ENCODE measurements at regions of chr2 and their contacts with region 1.

Region 1: GRCh38 chr2:85813982-85814801 is 60.4 kb downstream of the ATOH8 start:
- DNase-seq: peak; percentile 70
- H3K4me3 ChIP-seq: no peak overlapping the region
- H3K27ac ChIP-seq: no peak overlapping the region
- H3K27me3 ChIP-seq: no peaks in the 10 kb centered on the region
- CTCF ChIP-seq: peak; percentile 99

Region 2: GRCh38 chr2:85635636-85636035 is 178.6 kb before region 1 on chr2:
- CTCF ChIA-PET with region 1: interaction called, 30 read pairs
- POLR2A ChIA-PET with region 1: no interaction called
- DNase-seq: no peak
- H3K4me3 ChIP-seq: no peak overlapping the region
- H3K27ac ChIP-seq: peak overlapping the region; percentile 21
- H3K27me3 ChIP-seq: no peaks in the 10 kb centered on the region
- CTCF ChIP-seq: no peak

Region 3: DNA sequence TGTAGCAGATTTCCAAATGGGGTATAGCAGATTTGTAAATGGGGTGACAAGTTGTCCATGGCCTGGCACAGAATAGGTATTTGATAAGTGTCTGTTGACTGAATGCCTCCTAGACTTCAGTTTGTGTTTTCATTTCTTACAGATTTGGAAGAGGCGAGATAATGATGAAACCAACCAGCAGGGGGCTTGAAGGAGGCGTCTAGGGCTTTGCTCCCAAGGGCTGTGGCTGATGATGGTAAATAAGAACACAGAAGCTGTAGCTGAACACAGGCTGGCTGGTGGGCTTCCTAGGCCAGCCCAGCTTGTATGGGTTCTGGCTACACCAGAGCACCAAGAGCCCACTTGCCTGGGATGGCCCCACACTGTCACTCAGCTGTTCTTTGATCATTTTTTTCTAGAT is 165.6 kb before region 1 on chr2:
- CTCF ChIA-PET with region 1: interaction called, 27 read pairs
- POLR2A ChIA-PET with region 1: no interaction called
- DNase-seq: peak; percentile 39
- H3K4me3 ChIP-seq: no peak overlapping the region
- H3K27ac ChIP-seq: peak overlapping the region; percentile 98
- H3K27me3 ChIP-seq: no peaks in the 10 kb centered on the region
- CTCF ChIP-seq: peak; percentile 71

Region 4: DNA sequence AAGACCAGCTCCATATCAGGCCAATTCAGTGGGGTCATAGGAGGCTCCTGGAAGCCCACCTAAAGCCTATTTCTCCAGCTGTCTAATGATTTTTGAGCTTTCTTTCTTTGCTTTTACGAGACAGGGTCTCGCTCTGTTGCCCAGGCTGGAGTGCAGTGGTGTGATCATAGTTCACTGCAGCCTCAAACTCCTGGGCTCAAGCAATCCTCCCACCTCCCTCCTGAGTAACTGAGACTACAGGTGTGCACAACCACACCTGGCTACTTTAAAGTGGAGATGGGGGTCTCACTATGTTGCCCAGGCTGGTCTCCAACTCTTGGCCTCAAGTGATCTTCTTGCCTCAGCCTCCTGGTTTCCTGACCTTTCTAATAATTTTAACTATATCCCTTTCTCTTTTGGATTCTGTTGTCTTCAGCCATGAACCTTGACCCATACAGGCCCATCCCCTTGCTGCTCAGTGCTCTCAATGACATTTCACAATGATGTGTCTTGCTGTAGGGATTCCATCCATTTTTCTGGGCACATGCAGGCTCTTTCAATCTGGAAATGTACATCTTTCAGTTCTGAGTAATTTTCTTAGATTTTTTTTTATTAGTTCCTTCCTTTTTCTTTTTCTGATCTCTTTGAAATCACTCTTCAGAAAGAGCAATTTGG is 90.4 kb before region 1 on chr2:
- CTCF ChIA-PET with region 1: interaction called, 203 read pairs
- POLR2A ChIA-PET with region 1: interaction called, 8 read pairs
- DNase-seq: no peak
- H3K4me3 ChIP-seq: no peak overlapping the region
- H3K27ac ChIP-seq: no peak overlapping the region
- H3K27me3 ChIP-seq: peaks cover 21% of the 10 kb centered on the region
- CTCF ChIP-seq: no peak

Region 5: DNA sequence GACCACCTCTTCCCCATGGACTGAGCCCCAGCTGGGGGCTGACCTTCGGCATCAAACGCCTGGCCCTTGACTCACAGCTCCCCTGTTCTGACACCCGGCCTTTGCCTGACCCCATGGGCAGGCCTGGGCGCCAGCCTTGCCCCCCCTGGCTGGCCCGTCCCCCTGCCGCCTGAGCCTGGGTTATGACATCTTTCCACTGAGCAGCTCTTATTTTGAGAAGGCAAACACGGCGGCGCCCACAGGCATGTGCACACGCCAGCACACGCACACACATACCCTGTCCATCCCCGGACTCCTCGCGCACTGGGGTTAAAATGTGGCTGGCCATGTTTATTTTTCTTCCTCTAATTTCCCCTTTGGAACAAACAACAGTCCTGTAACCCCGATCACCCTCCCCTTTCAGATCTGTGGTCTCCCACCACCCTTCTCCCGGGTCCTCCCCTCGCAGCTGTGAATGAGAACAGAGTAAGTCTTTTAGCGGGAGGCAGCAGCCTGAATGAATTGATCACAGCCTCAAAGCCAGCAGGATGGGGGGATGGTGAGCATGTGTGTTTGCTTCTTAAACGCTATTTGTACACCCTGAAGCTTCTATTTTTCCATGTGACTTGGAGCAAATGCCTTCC is 72.2 kb before region 1 on chr2:
- CTCF ChIA-PET with region 1: interaction called, 15 read pairs
- POLR2A ChIA-PET with region 1: interaction called, 3 read pairs
- DNase-seq: peak; percentile 89
- H3K4me3 ChIP-seq: peak overlapping the region; percentile 32
- H3K27ac ChIP-seq: peak overlapping the region; percentile 97
- H3K27me3 ChIP-seq: no peaks in the 10 kb centered on the region
- CTCF ChIP-seq: no peak; the same call in 1 of the 2 replicates

Region 6: DNA sequence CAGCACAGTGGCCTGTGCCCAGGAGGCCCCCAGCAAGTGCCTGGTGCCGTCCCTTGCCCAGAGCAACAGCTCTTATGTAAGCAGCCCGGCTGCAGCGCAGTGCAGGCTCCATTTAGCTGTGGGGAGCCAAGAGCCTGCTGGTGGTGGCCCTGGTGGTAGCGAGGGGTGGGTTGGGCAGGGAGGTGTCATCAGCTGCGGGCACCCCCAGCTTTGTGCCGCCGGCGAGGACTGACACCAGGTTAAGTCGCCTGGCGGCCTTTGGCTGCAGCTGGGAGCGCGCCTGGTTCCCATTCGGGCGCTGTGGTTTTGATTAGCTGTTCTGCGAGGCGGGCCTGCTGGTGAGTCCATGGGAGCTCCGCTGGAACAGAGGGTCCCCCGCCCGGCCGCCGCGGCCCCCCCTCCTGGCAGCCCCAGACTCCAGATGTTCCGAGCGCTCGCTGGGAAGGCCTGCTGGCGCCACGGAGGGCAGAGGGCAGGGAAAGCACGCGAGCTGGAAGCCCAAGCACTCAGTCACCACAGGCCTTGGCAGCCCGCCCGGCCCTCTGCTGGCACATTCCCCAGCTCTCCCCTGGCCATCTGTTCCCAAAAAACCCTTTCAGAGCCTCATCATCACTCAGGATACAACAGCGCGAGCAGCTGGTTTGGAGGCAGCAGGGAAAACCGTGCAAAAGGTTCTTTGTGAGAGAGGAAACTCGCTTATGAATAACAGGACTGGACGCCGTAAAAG is 42.0 kb before region 1 on chr2:
- CTCF ChIA-PET with region 1: interaction called, 11 read pairs
- POLR2A ChIA-PET with region 1: interaction called, 13 read pairs
- DNase-seq: peak; percentile 100
- H3K4me3 ChIP-seq: peak overlapping the region; percentile 25
- H3K27ac ChIP-seq: peak overlapping the region; percentile 97
- H3K27me3 ChIP-seq: no peaks in the 10 kb centered on the region
- CTCF ChIP-seq: peak; percentile 30; the same call in 1 of the 2 replicates